ENCODE measurements at regions of chr2 and their contacts with region 1.

Region 1: GRCh38 chr2:237572021-237572741 is 5.8 kb downstream of the PRLH start:
- DNase-seq: peak; percentile 95
- CTCF ChIP-seq: peak; percentile 90

Region 2: GRCh38 chr2:237421542-237422116 is 150.6 kb before region 1 on chr2:
- CTCF ChIA-PET with region 1: interaction called, 27 read pairs
- POLR2A ChIA-PET with region 1: no interaction called
- DNase-seq: peak; percentile 68
- CTCF ChIP-seq: peak; percentile 58

Region 3: DNA sequence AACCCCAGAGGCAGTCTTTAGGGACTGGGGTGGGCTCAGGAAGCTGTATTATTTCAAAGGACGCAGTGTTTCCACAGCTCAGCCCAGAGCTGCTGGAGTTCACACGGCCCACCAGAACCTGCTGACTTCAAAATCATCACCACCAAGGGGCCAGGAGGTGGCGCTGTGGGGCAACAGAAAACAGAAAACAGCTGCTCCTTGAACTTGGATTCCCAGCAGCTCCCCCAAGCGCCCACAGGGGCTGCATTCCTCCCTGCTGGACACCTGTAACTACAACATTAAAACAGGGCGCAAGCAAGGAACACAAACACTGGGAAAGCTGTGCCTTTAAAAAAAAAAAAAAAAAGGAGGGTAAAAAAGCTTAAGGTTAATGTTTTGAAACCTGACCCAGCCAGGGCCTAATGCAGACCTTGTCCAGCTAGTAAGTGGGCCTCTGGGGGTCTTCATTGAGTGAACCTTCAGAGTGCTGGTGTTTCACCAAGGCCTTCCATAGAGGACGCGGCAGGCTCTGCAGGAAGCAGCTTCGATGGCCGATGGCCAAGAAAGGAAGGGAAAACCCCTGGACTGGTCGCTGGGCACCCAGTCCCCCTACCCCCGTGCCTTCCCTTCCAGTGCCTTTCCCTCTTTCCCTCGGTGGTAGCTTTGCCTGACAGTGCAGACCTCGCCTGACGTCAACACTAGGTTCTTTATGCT is 59.3 kb before region 1 on chr2:
- CTCF ChIA-PET with region 1: interaction called, 317 read pairs
- POLR2A ChIA-PET with region 1: no interaction called
- DNase-seq: peak; percentile 88
- CTCF ChIP-seq: peak; percentile 88

Region 4: DNA sequence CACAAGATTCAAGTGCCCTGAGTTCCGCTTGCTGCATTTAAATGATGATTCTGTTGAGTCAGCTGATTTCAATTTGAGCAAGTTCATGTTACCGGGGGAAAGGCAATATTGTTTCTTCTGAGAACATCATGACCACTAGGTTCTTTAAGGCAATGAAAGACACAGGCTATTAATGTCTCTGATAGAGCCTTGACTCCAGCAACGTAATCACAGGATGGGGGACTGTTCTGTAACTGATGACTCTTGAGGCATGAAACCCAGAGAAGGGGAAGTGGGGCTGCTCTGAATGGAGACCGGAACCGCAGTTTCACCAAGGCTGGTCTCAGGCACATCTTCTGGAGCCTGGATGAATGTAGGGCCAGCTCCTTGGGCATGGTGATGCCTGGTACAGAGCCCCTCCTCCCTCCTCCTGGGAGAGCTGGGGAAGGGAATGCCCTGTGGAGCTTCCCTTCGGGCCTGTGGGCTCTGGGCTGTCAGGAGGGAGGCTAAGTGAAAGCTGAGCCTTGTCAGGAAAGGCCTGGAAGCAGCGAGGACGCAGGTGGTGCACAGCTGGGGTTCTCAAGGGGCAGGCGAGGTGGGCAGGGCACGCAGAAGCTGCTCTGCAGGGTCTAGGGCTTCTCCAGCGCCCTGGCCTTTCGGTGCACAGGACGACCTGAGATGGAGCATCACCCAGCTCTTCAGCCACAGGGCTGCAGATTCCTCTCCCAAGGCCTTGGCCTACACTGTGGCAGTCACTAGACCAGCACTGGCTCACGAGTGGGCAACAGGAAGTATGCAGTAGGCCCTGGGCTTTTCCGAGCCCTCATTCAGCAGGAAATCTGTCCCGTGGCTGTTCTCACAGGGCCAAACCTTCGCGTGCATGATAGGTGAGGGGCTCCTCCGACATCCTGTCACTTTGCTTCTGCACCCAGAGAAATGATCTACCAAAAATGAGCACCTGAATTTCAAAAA is 42.5 kb before region 1 on chr2:
- CTCF ChIA-PET with region 1: interaction called, 13 read pairs
- POLR2A ChIA-PET with region 1: no interaction called
- DNase-seq: peak; percentile 77
- CTCF ChIP-seq: no peak

Region 5: GRCh38 chr2:237549643-237550415 is 22.4 kb before region 1 on chr2:
- CTCF ChIA-PET with region 1: interaction called, 34 read pairs
- POLR2A ChIA-PET with region 1: no interaction called
- DNase-seq: no peak
- CTCF ChIP-seq: no peak